Endothelial cell of umbilical vein (primary cell): ENCODE measurements at regions of chr6 and their contacts with region 1.

Region 1: GRCh38 chr6:148144917-148145521 is 197.6 kb upstream of the SASH1 start:
- DNase-seq: peak; percentile 74
- H3K4me3 ChIP-seq: no peak overlapping the region
- H3K27ac ChIP-seq: peak overlapping the region; percentile 99
- H3K4me1 ChIP-seq: peaks cover 41% of the 10 kb centered on the region
- H3K27me3 ChIP-seq: no peaks in the 10 kb centered on the region
- CTCF ChIP-seq: peak; percentile 75 to 81
- POLR2A ChIP-seq: no peak

Region 2: GRCh38 chr6:148090326-148090725 is 54.7 kb before region 1 on chr6:
- CTCF ChIA-PET with region 1: interaction called, 3 read pairs
- POLR2A ChIA-PET with region 1: no interaction called
- dilution Hi-C with region 1: no loop called
- intact Hi-C with region 1: loop called (anchors 2 kb)
- DNase-seq: peak; percentile 85
- H3K4me3 ChIP-seq: no peak overlapping the region
- H3K27ac ChIP-seq: peak overlapping the region; percentile 55
- H3K4me1 ChIP-seq: peaks cover 13% of the 10 kb centered on the region
- H3K27me3 ChIP-seq: no peaks in the 10 kb centered on the region
- CTCF ChIP-seq: no peak
- POLR2A ChIP-seq: no peak